Activated CD4-positive, alpha-beta memory T cell treated with anti-CD3 and anti-CD28 coated beads for 36 hours (primary cell): ENCODE measurements at regions of chr3 and their contacts with region 1.

Region 1: GRCh38 chr3:115692887-115693524 is 69.7 kb downstream of the GAP43 start:
- DNase-seq: peak; percentile 78
- H3K4me3 Mint-ChIP-seq: no peak overlapping the region
- H3K27ac Mint-ChIP-seq: no peak overlapping the region
- H3K4me1 Mint-ChIP-seq: no peaks in the 10 kb centered on the region
- H3K27me3 Mint-ChIP-seq: no peaks in the 10 kb centered on the region

Region 2: DNA sequence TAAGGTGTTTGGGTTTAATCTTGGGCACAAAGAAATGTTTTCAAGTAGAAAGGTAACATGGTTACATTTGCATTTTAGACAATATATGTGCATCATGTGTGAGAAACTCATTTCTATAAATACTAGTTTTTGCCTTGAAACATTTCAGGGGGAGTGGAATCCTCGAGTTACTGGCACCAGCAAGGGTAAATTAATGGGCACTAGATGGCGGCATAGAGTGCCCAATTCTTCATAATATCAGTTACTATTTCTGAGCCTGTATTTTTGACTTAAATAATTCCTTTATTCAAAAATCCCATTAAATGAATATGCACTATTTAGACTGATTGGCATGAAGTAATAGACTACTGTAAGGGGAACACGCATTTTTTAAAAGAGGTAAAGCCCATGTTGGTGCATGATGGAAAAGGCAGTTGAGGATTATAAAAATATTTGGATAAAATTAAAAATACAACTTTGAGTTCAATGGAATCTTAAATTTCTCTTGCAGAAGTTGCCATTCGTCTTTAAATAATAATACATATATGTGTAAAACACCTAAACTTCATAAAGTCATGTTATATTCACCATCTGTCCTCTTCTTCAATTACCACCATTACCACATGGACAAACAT is 652.2 kb before region 1 on chr3:
- CTCF ChIA-PET with region 1: interaction called, 8 read pairs
- POLR2A ChIA-PET with region 1: no interaction called
- intact Hi-C with region 1: loop called (anchors 1 kb)
- DNase-seq: peak; percentile 34
- H3K4me3 Mint-ChIP-seq: no peak overlapping the region
- H3K27ac Mint-ChIP-seq: no peak overlapping the region
- H3K4me1 Mint-ChIP-seq: peaks cover 2% of the 10 kb centered on the region
- H3K27me3 Mint-ChIP-seq: no peaks in the 10 kb centered on the region

Region 3: DNA sequence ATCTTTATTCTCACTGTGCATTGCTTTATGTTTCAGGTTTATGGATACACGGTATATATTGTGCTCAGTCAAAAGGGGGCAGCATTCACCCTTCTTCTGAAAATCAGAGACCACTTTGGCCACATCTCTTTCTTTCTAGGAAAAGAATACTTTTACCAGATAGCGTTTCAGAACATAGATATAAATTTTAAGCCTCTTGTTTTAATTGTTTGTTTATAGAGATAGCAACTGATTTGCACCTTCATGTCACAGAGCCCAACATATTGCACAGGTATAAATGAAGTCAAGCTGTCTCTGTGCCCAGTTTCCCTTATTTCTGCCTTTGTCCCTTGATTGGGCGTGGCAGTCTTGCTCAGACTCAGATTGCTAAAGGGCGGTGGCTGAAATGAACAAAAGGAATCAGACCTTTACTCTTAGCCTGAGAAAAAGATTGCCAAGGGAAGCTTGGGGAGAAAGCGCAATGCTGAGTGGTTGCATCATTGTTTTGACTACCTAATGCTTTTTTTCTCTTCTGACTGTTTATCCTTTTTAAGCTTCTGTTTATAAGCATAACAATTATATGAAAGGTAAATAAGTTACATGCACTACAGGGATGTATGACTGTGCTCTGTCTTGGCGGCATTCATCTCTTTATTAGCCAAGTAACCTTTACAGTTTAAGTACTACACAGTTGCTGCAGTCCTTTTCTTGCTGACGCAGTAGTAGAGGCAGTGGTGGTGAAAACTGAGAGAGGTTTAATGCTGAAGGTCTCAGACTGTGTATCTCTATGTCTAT is 475.1 kb before region 1 on chr3:
- CTCF ChIA-PET with region 1: interaction called, 24 read pairs
- POLR2A ChIA-PET with region 1: no interaction called
- intact Hi-C with region 1: loop called (anchors 1 kb)
- DNase-seq: no peak
- H3K4me3 Mint-ChIP-seq: no peak overlapping the region
- H3K27ac Mint-ChIP-seq: no peak overlapping the region
- H3K4me1 Mint-ChIP-seq: no peaks in the 10 kb centered on the region
- H3K27me3 Mint-ChIP-seq: peaks cover 2% of the 10 kb centered on the region

Region 4: GRCh38 chr3:115658337-115659181 is 34.4 kb before region 1 on chr3:
- CTCF ChIA-PET with region 1: no interaction called
- POLR2A ChIA-PET with region 1: no interaction called
- intact Hi-C with region 1: loop called (anchors 2 kb)
- DNase-seq: peak; percentile 86
- H3K4me3 Mint-ChIP-seq: peak overlapping the region; percentile 82
- H3K27ac Mint-ChIP-seq: peak overlapping the region; percentile 92
- H3K4me1 Mint-ChIP-seq: peaks cover 40% of the 10 kb centered on the region
- H3K27me3 Mint-ChIP-seq: no peaks in the 10 kb centered on the region